Activated B cell treated with CpG ODN at 0.5 μM for 24 hours (primary cell): ENCODE measurements at regions of chr9 and their contacts with region 1.

Region 1: DNA sequence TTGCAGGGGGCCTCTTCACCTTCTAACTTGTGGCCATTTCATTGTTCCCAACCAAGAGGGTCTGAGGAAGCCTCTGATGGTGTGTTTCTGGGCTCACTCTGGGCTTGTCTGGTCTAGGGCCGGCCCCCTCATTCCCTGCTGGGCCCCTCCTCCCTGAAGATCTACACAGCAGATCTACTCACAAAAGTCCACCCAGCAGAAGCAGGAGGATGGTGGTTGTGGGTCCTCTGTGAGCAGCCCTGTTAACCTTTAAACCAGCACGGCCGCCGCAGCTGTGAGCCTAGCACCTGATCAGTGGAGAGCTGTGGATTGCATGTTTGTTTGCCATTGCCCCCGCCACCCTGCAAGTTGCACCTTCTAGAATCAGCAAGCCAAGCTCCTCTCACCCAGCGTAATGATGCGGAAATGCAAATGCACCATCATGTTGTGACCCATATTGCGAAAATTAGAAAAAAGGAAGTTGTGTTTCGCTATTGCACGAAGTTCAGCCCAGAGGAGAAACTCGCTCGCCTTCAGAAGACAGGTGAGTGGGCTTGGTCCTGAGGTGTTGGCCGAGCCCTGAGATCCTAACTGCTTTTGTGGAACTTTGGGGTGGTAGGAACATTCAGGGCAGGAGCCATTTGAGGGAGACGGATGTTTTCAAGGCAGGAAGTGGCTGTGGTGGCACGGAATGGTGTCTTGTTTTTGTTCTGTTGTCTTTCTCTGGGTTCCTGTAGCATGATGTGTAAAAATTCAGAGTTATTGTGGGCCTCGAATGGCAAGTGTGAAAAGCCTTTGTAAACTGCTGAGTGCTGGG is 16.7 kb downstream of the FGD3 start:
- DNase-seq: peak; percentile 56
- ATAC-seq: peak; percentile 82
- H3K4me3 Mint-ChIP-seq: peak overlapping the region; percentile 94
- H3K27ac Mint-ChIP-seq: peak overlapping the region; percentile 99
- H3K4me1 Mint-ChIP-seq: peaks cover 69% of the 10 kb centered on the region
- H3K27me3 Mint-ChIP-seq: no peaks in the 10 kb centered on the region
- CTCF ChIP-seq: no peak

Region 2: DNA sequence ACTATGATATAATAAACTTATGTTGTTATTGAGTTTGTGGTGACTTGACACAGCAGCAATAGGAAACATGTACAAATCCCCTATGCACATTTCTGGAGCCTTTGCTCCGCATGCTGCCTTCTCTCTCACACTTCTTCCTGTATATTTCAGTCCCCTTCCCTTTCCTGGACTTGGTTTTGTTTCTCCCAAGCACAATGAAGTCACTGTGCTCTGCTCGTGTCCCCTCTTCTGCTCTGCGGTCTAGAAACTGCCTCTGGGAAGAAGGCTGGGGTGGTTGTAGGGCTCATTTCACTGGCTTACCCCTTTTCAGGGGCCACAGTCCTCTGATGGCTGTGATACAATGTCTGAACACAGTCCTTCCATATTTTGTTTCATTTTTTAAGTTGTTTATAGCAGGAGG is 32.4 kb before region 1 on chr9:
- CTCF ChIA-PET with region 1: no interaction called
- POLR2A ChIA-PET with region 1: no interaction called
- intact Hi-C with region 1: no loop called
- DNase-seq: no peak
- ATAC-seq: no peak
- H3K4me3 Mint-ChIP-seq: no peak overlapping the region
- H3K27ac Mint-ChIP-seq: no peak overlapping the region
- H3K4me1 Mint-ChIP-seq: no peaks in the 10 kb centered on the region
- H3K27me3 Mint-ChIP-seq: peaks cover 4% of the 10 kb centered on the region
- CTCF ChIP-seq: no peak

Region 3: GRCh38 chr9:92986176-92987085 is 22.4 kb after region 1 on chr9:
- CTCF ChIA-PET with region 1: no interaction called
- POLR2A ChIA-PET with region 1: interaction called, 8 read pairs
- intact Hi-C with region 1: loop called (anchors 2 kb)
- DNase-seq: no peak
- ATAC-seq: peak; percentile 50
- H3K4me3 Mint-ChIP-seq: no peak overlapping the region
- H3K27ac Mint-ChIP-seq: peak overlapping the region; percentile 77
- H3K4me1 Mint-ChIP-seq: peaks cover 56% of the 10 kb centered on the region
- H3K27me3 Mint-ChIP-seq: no peaks in the 10 kb centered on the region
- CTCF ChIP-seq: peak; percentile 55

Region 4: GRCh38 chr9:93058355-93059096 is 94.5 kb after region 1 on chr9 and contains the start of gene SUSD3:
- CTCF ChIA-PET with region 1: no interaction called
- POLR2A ChIA-PET with region 1: interaction called, 8 read pairs
- intact Hi-C with region 1: loop called (anchors 1 kb)
- DNase-seq: peak; percentile 73
- ATAC-seq: peak; percentile 75
- H3K4me3 Mint-ChIP-seq: peak within 1 kb of the TSS; percentile 87
- H3K27ac Mint-ChIP-seq: peak within 1 kb of the TSS; percentile 95
- H3K4me1 Mint-ChIP-seq: peaks cover 63% of the 10 kb centered on the region
- H3K27me3 Mint-ChIP-seq: no peaks in the 10 kb centered on the region
- CTCF ChIP-seq: no peak
- total RNA-seq, gene SUSD3: 9.1 and 12.9 TPM in 2 replicates

Region 5: GRCh38 chr9:93095205-93096130 is 131.4 kb after region 1 on chr9:
- CTCF ChIA-PET with region 1: no interaction called
- POLR2A ChIA-PET with region 1: interaction called, 8 read pairs
- intact Hi-C with region 1: loop called (anchors 2 kb)
- DNase-seq: peak; percentile 100
- ATAC-seq: peak; percentile 79
- H3K4me3 Mint-ChIP-seq: peak overlapping the region; percentile 86
- H3K27ac Mint-ChIP-seq: peak overlapping the region; percentile 99
- H3K4me1 Mint-ChIP-seq: peaks cover 83% of the 10 kb centered on the region
- H3K27me3 Mint-ChIP-seq: no peaks in the 10 kb centered on the region
- CTCF ChIP-seq: no peak

Region 6: DNA sequence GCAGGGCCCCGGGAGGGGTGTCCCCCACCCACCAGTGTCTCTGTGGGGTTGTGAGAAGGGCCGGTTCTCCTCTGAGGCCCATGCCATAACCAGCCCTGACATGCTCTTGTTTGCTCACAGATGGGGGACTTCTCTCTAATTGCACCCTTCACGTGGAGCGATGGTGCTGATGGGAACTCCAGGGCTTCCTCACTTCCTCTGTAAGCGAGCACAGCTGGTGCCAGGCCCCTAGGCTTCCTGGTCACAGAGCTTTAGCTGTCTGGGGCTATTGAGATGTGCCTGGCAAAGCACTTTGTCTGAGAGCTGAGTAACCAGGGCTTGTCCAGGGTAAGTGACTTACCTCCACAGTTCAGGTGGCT is 648.7 kb after region 1 on chr9:
- CTCF ChIA-PET with region 1: no interaction called
- POLR2A ChIA-PET with region 1: no interaction called
- intact Hi-C with region 1: no loop called
- DNase-seq: no peak
- ATAC-seq: peak; percentile 45
- H3K4me3 Mint-ChIP-seq: no peak overlapping the region
- H3K27ac Mint-ChIP-seq: no peak overlapping the region
- H3K4me1 Mint-ChIP-seq: peaks cover 17% of the 10 kb centered on the region
- H3K27me3 Mint-ChIP-seq: no peaks in the 10 kb centered on the region
- CTCF ChIP-seq: no peak